Right ventricle myocardium inferior (tissue), 1 donor: ENCODE measurements at regions of chr1 and their contacts with region 1.

Region 1: DNA sequence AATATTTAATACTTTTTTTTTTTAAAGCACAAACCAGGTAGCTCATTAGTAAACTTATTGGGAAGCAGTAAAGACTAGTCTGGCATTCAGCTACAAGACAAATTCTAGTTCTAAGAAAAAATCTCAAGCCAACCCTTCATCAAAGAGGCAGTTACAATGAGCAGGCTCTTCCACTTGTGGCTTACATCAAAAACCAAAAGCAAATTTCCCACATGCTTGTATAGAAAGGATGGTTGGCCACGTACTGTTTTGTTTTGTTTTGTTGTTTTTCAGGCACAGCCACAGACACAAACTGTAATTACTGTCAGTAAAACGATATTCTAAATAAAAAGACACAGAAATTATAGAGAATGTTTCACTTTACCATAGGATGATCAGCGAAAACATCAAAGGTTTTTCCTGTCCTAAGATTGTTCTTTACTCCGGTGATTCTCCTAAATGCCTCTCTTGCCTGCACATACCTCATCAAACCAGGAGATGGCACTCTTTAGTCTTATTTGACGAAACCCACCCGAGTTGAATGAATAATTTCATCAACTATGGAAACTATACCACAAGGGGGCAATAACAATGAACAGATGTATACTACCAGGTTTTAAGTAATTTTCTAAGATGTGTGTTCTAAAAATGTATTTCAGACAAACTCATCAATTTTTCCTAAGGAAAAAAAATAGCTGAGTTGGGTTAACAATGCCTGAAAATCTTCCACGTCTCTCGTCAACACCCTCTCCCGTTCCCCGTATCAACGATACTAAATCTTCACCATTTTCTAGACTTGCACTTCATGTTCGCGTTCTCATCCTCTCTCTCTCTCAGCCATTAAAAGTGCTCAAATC is 26.9 kb downstream of the RPL5 start:
- DNase-seq: no peak
- ATAC-seq: peak; percentile 88

Region 2: GRCh38 chr1:92759361-92759760 is 99.4 kb before region 1 on chr1:
- intact Hi-C with region 1: no loop called
- DNase-seq: no peak
- ATAC-seq: no peak

Region 3: GRCh38 chr1:92792340-92792782 is 66.4 kb before region 1 on chr1:
- intact Hi-C with region 1: no loop called
- DNase-seq: no peak
- ATAC-seq: no peak

Region 4: DNA sequence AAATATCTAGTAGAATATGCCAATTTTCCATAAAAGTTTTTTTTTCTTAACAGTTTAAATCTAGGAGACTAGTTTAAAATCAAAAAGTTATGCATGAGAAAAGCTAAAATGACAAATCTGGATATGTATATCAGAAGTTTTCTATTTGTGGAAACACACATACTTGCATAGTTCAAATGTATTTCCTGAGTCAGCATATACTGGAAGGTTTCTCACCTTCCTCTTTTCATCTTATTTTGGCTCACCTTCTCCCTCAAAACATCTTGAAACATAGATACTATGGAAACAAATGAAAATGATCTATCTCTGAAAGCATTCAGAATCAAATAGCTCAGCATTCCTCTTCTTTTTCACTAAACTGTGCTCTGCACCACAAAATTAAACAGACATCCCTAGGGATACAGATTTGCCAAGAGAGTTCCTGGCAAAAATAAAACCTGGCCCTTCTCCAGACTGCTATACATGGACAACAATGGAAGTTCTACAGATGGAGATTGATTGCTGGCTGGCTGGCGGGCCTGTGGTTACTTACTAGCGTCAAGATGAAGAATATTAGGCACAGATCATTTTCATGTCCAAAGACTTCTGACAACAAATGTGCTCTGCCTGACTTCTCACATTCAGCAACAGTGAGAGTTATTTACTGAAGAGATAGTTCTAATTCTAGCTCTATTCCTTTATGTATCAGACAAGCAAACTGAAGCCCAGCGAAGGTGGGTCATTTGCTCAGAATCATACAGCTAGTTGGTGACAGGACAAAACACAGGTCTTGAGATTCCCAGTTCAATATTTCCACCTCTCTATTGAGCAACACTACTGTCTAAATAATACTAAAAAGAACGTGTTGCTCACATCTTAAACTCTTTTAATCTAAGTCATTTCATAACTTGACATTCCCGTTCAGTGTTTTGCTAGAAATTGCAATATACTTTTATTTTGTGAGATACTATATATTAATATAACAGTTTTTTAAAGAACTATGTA is 75.9 kb after region 1 on chr1:
- intact Hi-C with region 1: no loop called
- DNase-seq: no peak
- ATAC-seq: peak; percentile 81

Region 5: DNA sequence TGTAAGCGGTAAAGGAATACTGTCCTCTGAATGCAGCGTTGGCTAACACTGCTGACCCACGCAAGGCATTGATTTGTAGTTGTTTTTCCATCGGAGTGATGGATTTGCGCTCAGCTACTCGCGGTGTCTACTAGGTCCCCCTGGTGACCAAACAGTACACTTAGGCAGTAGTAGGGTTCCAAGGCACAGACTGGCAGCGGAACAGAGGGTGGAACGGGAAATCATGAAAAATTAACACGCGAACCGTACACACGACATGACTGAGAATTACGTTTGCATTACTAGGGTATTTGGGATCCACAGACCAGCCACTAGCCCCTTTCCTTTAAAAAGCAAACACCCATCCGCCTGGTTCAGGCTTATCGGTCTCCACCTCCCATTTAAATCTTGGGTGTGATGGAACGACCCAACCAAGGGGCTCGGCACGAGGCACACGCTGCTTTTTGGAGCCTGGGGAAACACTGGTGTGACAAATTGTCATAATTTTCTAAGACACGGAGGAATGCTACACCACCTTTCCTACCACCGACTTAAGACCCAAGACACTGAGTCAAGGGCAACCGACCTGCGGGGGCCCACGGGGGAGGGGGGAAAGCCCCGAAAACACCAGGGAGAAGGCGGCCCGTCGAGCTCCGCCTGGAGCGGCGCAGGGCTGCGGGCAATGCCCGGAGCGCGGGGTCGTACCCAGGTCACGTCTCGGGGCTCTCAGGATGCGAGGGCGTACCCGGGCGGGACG is 101.8 kb after region 1 on chr1:
- intact Hi-C with region 1: loop called (anchors 10 kb)
- DNase-seq: no peak
- ATAC-seq: peak; percentile 74

Region 6: DNA sequence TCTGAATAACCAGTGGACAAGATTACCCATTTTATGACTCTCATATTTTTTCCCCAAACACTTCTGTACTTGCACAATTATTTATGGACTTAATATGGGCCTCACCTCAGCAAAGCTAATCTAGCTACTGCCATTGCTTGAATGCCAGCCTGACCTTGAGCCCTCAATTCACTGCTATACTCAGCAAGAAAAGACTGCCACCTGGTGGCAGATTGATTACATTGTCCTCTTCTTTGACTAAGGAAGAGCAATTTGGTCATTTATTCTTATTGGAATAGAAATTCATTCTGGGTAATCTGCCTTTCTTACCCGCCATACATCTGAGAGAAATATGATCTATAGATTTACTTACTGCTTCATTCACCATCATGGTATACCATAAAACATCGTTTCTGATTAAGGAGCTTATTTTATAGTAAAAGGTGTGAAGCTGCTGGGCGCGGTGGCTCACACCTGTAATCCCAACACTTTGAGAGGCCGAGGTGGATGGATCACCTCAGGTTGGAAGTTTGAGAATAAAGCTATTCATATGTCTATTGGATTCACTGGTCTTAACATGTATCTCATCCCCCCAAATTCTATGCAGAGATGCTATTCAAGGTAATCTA is 135.4 kb after region 1 on chr1:
- intact Hi-C with region 1: loop called (anchors 1 kb)
- DNase-seq: no peak
- ATAC-seq: peak; percentile 85

Region 7: GRCh38 chr1:93061895-93062792 is 203.4 kb after region 1 on chr1:
- intact Hi-C with region 1: loop called (anchors 10 kb)
- DNase-seq: no peak
- ATAC-seq: no peak